ENCODE measurements at regions of chr3 and their contacts with region 1.

Region 1: DNA sequence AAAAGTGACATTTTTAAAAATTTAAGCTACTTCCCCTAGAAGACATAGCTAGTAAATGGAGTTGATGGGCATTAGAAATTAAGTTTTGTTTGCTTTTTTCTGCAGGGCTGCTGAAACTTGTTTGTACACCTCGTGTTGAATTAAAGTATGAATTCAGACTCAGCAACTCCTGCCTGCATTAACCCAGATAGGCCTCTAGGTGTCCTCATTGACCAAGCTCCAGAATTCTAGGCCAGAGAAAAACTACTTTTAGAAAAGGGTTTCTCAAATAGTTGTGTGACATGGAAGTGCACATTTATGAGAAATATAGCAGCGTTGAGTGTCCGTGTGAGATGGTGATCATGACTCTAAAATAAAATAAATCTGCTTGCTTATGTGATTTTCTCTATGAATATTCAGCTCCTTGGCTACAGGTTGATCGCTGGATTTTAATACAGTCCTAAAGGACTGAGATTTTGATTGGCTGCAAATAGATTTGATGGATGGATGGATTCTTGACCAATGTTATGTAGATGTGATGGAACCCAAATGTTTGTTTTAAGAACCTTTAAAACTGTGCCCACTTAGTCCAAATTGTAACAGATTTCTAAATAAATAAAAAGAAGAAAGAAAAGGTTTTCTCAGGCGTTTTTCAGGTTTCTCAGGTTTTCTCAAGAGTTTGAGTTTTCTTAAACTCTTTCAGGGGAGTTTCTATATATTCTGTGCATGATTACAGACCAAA is 39.4 kb upstream of the LMOD3 start:
- DNase-seq: no peak
- ATAC-seq: peak; percentile 30 to 47

Region 2: GRCh38 chr3:69231929-69232440 is 70.2 kb after region 1 on chr3:
- intact Hi-C with region 1: no loop called
- DNase-seq: peak; percentile 39
- ATAC-seq: peak; percentile 59 to 97

Region 3: DNA sequence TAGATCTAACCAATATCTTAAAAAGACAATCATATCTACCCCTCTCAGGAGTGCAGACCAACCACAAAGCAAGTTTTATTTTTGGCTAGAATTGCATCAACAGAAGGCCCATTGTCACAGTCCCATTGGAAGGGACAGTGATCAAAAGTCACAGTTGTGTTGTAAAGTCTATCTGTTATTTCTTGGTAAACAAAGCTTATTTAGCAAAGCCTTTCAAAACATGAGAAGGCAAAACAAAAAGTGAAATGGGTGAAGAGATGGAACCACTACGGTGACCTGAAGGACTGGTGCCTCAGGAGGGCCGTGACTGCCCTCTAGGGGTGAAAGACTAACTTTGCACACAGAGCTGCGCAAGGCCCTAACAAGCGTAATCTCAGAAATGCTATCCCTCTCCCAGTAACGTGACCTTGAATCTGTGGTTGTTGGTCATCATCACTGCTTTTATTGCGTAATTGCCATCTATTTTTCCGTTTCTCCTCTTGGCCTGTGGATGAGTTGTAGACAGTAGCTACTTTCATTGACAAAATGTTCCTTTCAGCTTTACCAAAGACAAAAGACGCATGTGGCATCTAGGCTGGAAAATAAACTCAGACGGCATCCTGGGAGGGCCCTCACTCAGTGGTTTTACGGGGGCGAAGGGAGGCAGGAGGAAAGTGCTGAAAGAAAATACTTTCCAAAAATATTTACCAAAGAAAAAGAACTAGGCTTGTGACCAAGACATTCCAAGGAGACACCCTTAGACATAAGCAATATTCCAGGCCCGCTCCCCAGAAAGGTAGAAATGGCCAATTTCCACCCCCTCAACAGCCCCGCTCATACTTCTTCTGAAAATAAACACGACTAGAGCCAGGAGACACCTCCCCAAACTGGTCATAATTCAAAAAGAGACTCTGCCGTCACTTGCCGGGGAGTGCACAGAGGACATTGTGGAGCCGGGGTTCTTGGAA is 144.8 kb after region 1 on chr3:
- intact Hi-C with region 1: loop called (anchors 2 to 5 kb)
- DNase-seq: peak; percentile 72
- ATAC-seq: peak; percentile 94 to 95

Region 4: DNA sequence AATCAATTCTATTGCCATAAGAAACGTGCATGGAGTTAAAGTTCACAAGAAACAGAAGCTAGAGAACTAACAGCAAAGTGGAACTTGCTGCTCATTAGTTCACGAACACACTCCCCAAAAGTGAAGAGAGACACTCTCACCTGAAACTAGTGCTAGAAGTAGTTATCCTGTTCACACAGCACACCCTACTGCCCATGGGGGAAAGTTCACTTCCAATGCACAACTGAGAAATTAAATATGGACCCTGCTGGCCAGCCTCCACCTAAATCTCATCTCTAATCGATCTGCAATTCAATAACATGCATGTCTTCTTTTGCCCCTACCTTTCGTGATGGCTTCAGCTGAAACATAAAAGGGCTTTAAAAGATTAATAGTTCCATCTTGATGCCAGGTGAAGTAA is 263.5 kb after region 1 on chr3:
- intact Hi-C with region 1: loop called (anchors 5 to 10 kb)
- DNase-seq: no peak
- ATAC-seq: peak; percentile 53 to 69

Region 5: DNA sequence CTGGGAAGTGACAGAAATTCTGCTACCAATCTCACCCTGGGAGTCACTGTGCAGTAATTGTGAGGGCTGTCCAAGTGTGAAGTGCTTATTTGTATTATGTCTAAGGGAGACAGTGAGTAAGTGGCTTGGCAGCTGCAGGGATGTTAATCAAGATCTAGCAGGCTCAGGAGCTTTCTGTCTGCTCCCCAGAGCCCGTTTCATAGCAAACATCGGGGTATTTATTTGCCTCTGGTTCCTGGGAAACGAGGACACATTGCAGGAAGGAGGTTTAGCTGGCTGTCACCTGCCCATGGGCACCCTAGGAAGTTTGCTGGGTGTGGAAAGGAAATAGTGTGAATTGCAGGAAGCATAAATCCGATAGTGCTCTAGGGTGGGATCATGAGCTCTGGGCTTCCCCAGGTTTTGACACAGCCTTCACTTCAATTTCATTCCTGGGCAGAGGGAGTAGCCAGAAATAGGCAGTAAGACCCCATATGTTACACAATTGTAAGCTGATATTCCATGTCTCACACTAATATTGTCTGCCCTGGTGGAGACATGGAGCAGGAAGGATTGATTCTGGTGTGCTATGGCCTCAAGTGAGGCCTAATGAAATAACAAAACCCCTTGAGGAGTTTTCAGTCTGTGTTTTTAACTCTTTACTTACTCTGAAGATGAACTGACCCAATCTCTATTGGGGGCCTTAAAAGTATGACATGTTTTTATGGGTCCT is 503.4 kb after region 1 on chr3:
- intact Hi-C with region 1: loop called (anchors 5 to 10 kb)
- DNase-seq: peak; percentile 50
- ATAC-seq: peak; percentile 83 to 97

Region 6: DNA sequence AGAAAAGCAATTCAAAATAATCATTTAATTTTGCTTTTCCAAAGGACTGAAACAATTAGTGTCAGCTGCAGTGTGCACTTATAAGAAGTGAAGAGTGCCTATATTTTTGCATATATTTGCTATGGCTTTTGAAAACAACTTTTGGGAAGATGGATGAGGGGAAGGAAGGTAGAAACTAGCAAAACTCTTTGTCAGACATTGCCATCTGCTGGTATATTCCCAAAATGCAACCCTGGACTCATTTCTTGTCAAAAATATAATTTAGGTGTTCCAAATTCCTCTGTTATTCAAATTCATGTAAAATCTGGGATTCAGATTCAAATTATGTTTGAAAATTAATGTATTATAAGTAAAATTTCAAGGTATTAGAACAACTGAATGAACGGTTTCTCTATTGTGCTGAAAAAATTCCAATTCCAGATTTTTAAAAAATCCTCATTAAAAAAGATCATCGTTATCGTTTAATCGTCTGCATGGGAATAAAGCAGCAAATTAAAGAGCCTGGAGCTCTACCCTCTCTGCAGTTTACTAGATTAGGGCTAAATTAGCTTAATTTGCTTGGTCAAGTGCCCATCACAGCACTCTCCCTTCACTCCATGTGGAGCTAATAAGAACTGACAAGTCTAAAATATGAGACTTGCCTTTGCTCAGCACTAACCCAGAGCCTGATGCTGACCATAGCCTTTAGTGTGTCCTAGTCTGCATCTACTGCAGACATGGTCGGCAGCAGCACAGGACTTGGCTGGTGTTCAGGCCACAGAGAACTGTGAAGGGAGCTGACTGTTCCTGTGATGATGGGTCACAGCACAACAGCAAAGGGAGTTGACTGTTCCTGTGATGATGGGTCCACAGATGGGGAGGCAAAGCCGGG is 509.6 kb after region 1 on chr3:
- intact Hi-C with region 1: loop called (anchors 5 to 10 kb)
- DNase-seq: peak; percentile 32
- ATAC-seq: peak; percentile 47 to 64

Measured in left cardiac atrium (tissue), 4 donors.